ENCODE measurements at regions of chr10 and their contacts with region 1.

Region 1: GRCh38 chr10:100518761-100519241 is 860 bp downstream of the SEC31B start:
- DNase-seq: peak; percentile 54
- ATAC-seq: peak; percentile 69
- H3K4me3 Mint-ChIP-seq: peak overlapping the region; percentile 39
- H3K27ac Mint-ChIP-seq: peak overlapping the region; percentile 50
- H3K4me1 Mint-ChIP-seq: peaks cover 35% of the 10 kb centered on the region
- H3K27me3 Mint-ChIP-seq: no peaks in the 10 kb centered on the region

Region 2: GRCh38 chr10:100433253-100434240 is 85.3 kb before region 1 on chr10:
- POLR2A ChIA-PET with region 1: interaction called, 11 read pairs
- DNase-seq: peak; percentile 89
- ATAC-seq: peak; percentile 98
- H3K4me3 Mint-ChIP-seq: no peak overlapping the region
- H3K27ac Mint-ChIP-seq: peak overlapping the region; percentile 63
- H3K4me1 Mint-ChIP-seq: peaks cover 14% of the 10 kb centered on the region
- H3K27me3 Mint-ChIP-seq: no peaks in the 10 kb centered on the region

Region 3: DNA sequence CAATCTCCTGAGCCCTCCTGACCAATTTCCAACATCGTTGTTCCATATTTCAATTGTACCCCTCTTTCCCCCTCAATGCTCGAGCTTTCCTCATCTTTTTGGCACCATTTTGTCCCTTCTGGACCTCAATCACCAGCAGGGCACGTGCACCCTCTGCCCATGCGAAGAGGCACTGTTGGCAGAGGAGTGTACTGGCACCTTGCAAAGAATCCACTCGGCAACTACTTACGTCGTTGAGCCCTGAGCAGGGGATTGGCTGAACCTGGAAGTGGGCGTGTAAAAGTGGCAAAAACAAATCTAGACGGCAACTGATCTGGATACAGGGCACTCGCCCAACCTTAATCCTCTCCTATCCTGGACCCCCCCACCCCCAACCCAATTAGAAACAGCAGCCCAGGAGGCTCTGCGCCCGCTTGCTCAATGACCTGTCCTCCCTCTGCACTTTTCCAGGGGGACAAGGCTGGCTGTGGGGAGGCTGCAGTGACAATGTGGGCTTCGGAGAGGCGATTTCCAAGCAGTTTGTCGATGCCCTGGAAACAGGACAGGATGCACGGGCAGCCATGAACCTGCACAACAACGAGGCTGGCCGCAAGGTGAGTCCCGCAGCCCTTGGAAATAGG is 37.2 kb before region 1 on chr10:
- POLR2A ChIA-PET with region 1: interaction called, 26 read pairs
- DNase-seq: peak; percentile 91
- ATAC-seq: peak; percentile 84
- H3K4me3 Mint-ChIP-seq: peak overlapping the region; percentile 80
- H3K27ac Mint-ChIP-seq: peak overlapping the region; percentile 69
- H3K4me1 Mint-ChIP-seq: peaks cover 29% of the 10 kb centered on the region
- H3K27me3 Mint-ChIP-seq: peaks cover 12% of the 10 kb centered on the region

Measured in activated naive CD8-positive, alpha-beta T cell treated with anti-CD3 and anti-CD28 coated beads, Interleukin-2, amount 10 ng/mL, durations not matched to agents 7 days and 5 days (primary cell).